ENCODE measurements at regions of chr19 and their contacts with region 1.

Region 1: GRCh38 chr19:32971715-32972540 is at the starts of genes CEP89 and FAAP24:
- DNase-seq: peak; percentile 97 to 98
- H3K4me3 ChIP-seq: peak within 1 kb of the TSS; percentile 87
- H3K4me1 ChIP-seq: peaks cover 4% of the 10 kb centered on the region; the same call in 1 of the 2 replicates
- H3K27me3 ChIP-seq: no peaks in the 10 kb centered on the region

Region 2: DNA sequence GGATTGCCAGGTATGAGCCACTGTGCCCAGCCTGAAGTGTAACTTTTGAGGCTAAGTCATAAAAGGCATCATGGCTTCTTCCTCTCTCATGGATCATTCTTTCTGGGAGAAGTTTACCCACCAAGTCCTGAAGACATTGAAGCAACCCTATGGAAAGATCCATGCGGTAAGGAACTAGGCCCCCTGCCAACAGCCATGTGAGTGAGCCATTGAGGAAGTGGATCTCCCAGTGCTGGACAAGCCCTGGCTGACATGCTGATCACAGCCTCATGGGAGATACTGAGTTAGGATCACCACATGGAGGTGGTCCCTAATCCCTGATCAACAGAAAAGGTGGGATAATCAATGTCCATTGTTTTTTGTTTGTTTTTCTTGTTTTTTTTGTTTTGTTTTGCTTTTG is 283.6 kb before region 1 on chr19:
- in situ Hi-C with region 1: loop called (anchors 10 kb)
- DNase-seq: no peak
- H3K4me3 ChIP-seq: no peak overlapping the region
- H3K4me1 ChIP-seq: peaks cover 20% of the 10 kb centered on the region
- H3K27me3 ChIP-seq: no peaks in the 10 kb centered on the region

Region 3: DNA sequence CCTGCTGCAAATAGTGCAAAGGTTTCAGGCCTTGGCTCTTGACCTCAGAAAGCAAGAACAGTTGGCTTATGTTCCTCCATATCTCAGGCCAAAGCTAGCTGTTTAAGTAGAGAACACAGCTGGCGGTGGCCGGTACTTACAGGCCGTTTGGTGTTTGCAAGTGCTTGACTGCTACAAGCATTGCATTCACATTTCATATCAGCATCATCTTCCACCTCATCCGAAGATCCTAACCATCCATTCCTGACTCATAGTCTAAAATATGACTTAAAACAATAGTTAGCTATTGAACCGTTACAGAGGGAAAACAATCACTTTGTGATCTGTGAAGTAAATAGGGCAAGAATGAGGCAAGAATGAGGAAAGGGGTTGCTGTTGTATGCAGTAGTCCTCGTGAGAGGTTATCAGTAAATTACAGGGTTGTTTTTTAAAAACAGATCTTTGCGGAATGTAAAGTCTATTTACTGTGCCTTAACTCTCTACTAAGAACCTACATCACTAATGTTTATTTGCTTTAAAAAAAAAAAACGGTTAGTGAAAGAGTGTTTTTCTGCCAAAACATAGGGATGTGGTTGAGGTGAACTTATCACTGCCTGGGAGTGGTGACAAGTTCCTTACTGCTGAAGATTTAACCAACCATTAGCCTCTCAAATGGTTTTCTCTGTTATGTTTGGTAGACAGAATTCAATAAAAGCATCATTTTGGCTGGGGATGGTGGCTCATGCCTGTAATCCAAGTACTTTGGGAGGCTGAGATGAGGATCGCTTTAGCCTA is 138.4 kb after region 1 on chr19:
- in situ Hi-C with region 1: loop called (anchors 10 kb)
- DNase-seq: no peak
- H3K4me3 ChIP-seq: no peak overlapping the region
- H3K4me1 ChIP-seq: no peaks in the 10 kb centered on the region; the same call in 1 of the 2 replicates
- H3K27me3 ChIP-seq: no peaks in the 10 kb centered on the region